ENCODE measurements at regions of chr17 and their contacts with region 1.

Region 1: DNA sequence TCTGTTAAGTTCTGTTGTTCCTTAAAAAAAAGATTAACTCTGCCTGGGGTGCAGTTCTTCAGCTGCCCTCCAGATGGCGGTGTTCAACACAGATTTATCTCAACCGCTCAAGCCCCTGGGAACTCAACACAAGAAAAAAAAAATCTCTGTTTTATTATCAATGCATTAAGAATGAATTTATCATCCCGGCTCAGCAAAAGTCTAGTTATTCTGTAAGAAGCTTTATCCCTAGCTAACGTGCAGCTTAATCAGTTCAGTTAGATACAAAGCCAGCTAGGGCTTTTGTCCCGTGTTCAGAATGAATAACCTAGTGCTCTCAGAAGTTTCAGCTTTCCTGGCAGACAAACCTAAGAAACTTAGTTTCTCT is 475.9 kb upstream of the CCL2 start:
- DNase-seq: peak; percentile 67 to 77
- ATAC-seq: peak; percentile 48 to 84; a peak in 4 of 6 replicates
- H3K4me3 ChIP-seq: no peak overlapping the region
- H3K27ac ChIP-seq: no peak overlapping the region
- H3K4me1 ChIP-seq: no peaks in the 10 kb centered on the region
- CTCF ChIP-seq: peak; percentile 88
- EP300 ChIP-seq: no peak
- POLR2A ChIP-seq: no peak
- RAD21 ChIP-seq: peak; percentile 78 to 85

Region 2: DNA sequence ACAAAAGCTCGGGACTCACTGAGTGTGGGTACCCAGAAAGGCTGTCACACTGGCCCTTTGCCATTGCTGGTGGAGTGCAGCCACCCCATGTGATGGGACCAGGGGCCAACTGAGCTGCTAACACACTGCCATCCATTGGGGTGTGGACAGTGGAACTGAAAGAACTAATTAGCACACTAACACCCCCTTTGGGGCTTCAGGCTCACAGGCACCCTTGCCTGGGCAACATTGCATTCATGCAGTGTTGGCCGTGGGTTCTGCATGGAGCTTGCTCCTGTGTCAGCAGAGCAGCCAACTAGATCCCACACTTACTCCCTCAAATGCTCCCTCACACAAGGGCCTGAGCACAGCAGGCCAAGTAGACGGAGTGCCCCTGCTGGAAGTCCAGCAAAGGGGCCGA is 10.1 kb before region 1 on chr17:
- CTCF ChIA-PET with region 1: interaction called, 22 read pairs
- POLR2A ChIA-PET with region 1: no interaction called
- DNase-seq: no peak
- ATAC-seq: no peak
- H3K4me3 ChIP-seq: no peak overlapping the region
- H3K27ac ChIP-seq: no peak overlapping the region
- H3K4me1 ChIP-seq: no peaks in the 10 kb centered on the region
- CTCF ChIP-seq: no peak
- EP300 ChIP-seq: no peak
- POLR2A ChIP-seq: no peak
- RAD21 ChIP-seq: no peak

Region 3: DNA sequence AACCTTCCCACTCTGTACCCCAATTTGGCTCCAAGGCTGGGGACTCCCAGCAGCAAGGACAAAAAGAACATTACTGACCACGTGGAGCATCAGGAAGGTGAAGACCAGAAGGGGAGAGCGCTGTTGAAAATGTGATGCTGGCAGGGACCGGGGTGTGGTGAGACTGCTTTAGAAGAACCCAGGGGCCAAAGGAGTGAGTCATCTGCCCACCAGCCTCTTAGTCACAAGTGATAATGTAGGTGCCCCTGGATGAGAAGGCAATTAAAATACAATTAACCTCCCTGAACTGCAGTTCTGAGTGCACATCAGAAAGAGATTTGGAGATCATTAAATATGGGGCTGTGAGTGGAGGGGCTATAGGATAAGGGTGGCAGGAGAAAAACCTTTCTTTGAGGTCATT is 109.2 kb after region 1 on chr17:
- CTCF ChIA-PET with region 1: no interaction called
- POLR2A ChIA-PET with region 1: no interaction called
- DNase-seq: no peak
- ATAC-seq: no peak
- H3K4me3 ChIP-seq: no peak overlapping the region
- H3K27ac ChIP-seq: no peak overlapping the region
- H3K4me1 ChIP-seq: no peaks in the 10 kb centered on the region
- CTCF ChIP-seq: no peak
- EP300 ChIP-seq: no peak
- POLR2A ChIP-seq: no peak
- RAD21 ChIP-seq: no peak

Region 4: GRCh38 chr17:34146440-34147043 is 367.3 kb after region 1 on chr17:
- CTCF ChIA-PET with region 1: interaction called, 26 read pairs
- POLR2A ChIA-PET with region 1: no interaction called
- DNase-seq: peak; percentile 44 to 61
- ATAC-seq: peak; percentile 86 to 89
- H3K4me3 ChIP-seq: no peak overlapping the region
- H3K27ac ChIP-seq: no peak overlapping the region
- H3K4me1 ChIP-seq: no peaks in the 10 kb centered on the region
- CTCF ChIP-seq: peak; percentile 48
- EP300 ChIP-seq: no peak
- POLR2A ChIP-seq: no peak
- RAD21 ChIP-seq: peak; percentile 59 to 73

Region 5: GRCh38 chr17:34163646-34164045 is 384.4 kb after region 1 on chr17:
- CTCF ChIA-PET with region 1: interaction called, 42 read pairs
- POLR2A ChIA-PET with region 1: no interaction called
- DNase-seq: peak; percentile 23 to 29
- ATAC-seq: peak; percentile 79 to 87; a peak in 5 of 6 replicates
- H3K4me3 ChIP-seq: no peak overlapping the region
- H3K27ac ChIP-seq: no peak overlapping the region
- H3K4me1 ChIP-seq: no peaks in the 10 kb centered on the region
- CTCF ChIP-seq: peak; percentile 32; the same call in 2 of the 3 replicates
- EP300 ChIP-seq: no peak
- POLR2A ChIP-seq: no peak
- RAD21 ChIP-seq: peak; percentile 43 to 54

Measured in A549 (cell line).